IMR-90 (cell line): ENCODE measurements at regions of chr5 and their contacts with region 1.

Region 1: GRCh38 chr5:139517683-139518564 is 35.4 kb upstream of the STING1 start:
- DNase-seq: peak; percentile 79
- ATAC-seq: peak; percentile 91
- H3K4me3 ChIP-seq: peak overlapping the region; percentile 62
- H3K27ac ChIP-seq: peak overlapping the region; percentile 67
- H3K4me1 ChIP-seq: peaks cover 4% of the 10 kb centered on the region
- H3K27me3 ChIP-seq: no peaks in the 10 kb centered on the region; the same call in 1 of the 2 replicates
- CTCF ChIP-seq: peak; percentile 97
- POLR2A ChIP-seq: peak; percentile 47; the same call in 1 of the 2 replicates
- RAD21 ChIP-seq: peak; percentile 70

Region 2: GRCh38 chr5:139403787-139404483 is 114.0 kb before region 1 on chr5 and contains the start of gene SPATA24:
- CTCF ChIA-PET with region 1: no interaction called
- POLR2A ChIA-PET with region 1: no interaction called
- dilution Hi-C with region 1: loop called (anchors 25 kb)
- in situ Hi-C with region 1: no loop called
- intact Hi-C with region 1: no loop called
- DNase-seq: peak; percentile 96
- ATAC-seq: peak; percentile 98
- H3K4me3 ChIP-seq: peak within 1 kb of the TSS; percentile 59
- H3K27ac ChIP-seq: peak within 1 kb of the TSS; percentile 93
- H3K4me1 ChIP-seq: peaks cover 4% of the 10 kb centered on the region
- H3K27me3 ChIP-seq: no peaks in the 10 kb centered on the region
- CTCF ChIP-seq: no peak
- POLR2A ChIP-seq: peak; percentile 73
- RAD21 ChIP-seq: no peak
- total RNA-seq, gene SPATA24: 4.3 and 4.4 TPM in 2 replicates

Region 3: GRCh38 chr5:139422307-139422893 is 95.5 kb before region 1 on chr5:
- CTCF ChIA-PET with region 1: interaction called, 32 read pairs
- POLR2A ChIA-PET with region 1: no interaction called
- dilution Hi-C with region 1: loop called (anchors 25 kb)
- in situ Hi-C with region 1: loop called (anchors 5 kb)
- intact Hi-C with region 1: loop called (anchors 1 kb)
- DNase-seq: peak; percentile 78
- ATAC-seq: peak; percentile 96
- H3K4me3 ChIP-seq: no peak overlapping the region
- H3K27ac ChIP-seq: no peak overlapping the region
- H3K4me1 ChIP-seq: peaks cover 7% of the 10 kb centered on the region; the same call in 1 of the 2 replicates
- H3K27me3 ChIP-seq: no peaks in the 10 kb centered on the region
- CTCF ChIP-seq: peak; percentile 94
- POLR2A ChIP-seq: 0 out of 2 replicates have a peak, but pooled peaks have one; percentile 34
- RAD21 ChIP-seq: peak; percentile 97

Region 4: GRCh38 chr5:139690064-139690802 is 172.3 kb after region 1 on chr5:
- CTCF ChIA-PET with region 1: no interaction called
- POLR2A ChIA-PET with region 1: no interaction called
- dilution Hi-C with region 1: no loop called
- in situ Hi-C with region 1: no loop called
- intact Hi-C with region 1: loop called (anchors 5 kb)
- DNase-seq: peak; percentile 61
- ATAC-seq: peak; percentile 56
- H3K4me3 ChIP-seq: no peak overlapping the region
- H3K27ac ChIP-seq: peak overlapping the region; percentile 26; the same call in 1 of the 2 replicates
- H3K4me1 ChIP-seq: peaks cover 35% of the 10 kb centered on the region
- H3K27me3 ChIP-seq: no peaks in the 10 kb centered on the region
- CTCF ChIP-seq: peak; percentile 58
- POLR2A ChIP-seq: no peak
- RAD21 ChIP-seq: peak; percentile 54